Mammary epithelial cell (primary cell): ENCODE measurements at regions of chrX and their contacts with region 1.

Region 1: DNA sequence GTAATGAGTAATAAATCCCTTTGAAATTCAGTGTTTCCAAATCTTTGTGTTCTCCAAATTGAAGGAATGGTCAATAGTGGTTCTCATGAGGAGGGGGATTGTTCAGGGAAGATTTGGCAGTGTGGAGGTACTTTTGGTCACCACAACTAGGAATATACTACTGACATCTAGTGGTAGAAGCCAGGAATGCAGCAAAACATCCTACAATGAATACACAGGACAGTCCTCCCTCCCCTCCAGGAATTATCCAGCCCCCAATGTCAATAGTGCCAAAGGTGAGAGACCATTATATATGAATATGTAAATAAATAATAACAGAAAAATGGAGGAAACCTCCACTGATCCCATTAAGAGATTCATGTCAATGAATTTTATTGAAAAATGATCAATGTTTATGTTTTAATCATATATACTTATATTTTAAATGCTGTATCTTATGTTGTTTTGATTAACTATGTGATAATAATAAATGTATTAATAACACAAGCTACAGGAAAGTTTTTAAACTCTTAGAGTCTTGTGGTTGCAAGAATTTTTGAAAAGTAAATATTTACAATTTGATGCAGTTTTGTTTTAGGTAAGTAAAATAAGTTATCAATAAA is 14.4 kb upstream of the FAM9A start:
- DNase-seq: peak; percentile 33
- H3K4me3 ChIP-seq: no peak overlapping the region
- H3K27ac ChIP-seq: no peak overlapping the region
- H3K4me1 ChIP-seq: no peaks in the 10 kb centered on the region
- H3K27me3 ChIP-seq: no peaks in the 10 kb centered on the region
- CTCF ChIP-seq: peak; percentile 65 to 80

Region 2: DNA sequence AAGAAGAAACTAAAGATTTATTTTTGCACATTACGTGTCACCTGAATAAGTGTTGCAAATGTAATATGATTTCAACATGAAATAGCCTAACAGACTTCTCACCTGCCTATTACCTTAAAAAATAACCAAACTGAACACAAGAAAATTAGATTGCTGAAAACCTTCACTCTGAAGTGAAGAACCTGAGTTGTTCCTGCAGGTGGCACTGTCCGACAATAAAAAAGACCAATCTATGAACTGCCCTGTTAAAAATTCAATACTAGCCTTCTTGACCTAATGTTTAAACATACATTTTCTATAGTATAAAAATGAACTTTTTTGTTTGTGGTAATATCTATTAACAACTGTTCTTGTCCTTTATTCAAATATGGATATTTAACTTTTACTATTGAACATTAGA is 819.2 kb before region 1 on chrX:
- CTCF ChIA-PET with region 1: no interaction called
- dilution Hi-C with region 1: no loop called
- in situ Hi-C with region 1: no loop called
- intact Hi-C with region 1: loop called (anchors 5 kb)
- DNase-seq: peak; percentile 19
- H3K4me3 ChIP-seq: no peak overlapping the region
- H3K27ac ChIP-seq: no peak overlapping the region
- H3K4me1 ChIP-seq: no peaks in the 10 kb centered on the region
- H3K27me3 ChIP-seq: no peaks in the 10 kb centered on the region
- CTCF ChIP-seq: peak; percentile 60 to 62

Region 3: GRCh38 chrX:8743126-8743732 is 72.3 kb before region 1 on chrX:
- CTCF ChIA-PET with region 1: no interaction called
- dilution Hi-C with region 1: no loop called
- in situ Hi-C with region 1: no loop called
- intact Hi-C with region 1: loop called (anchors 1 kb)
- DNase-seq: peak; percentile 35
- H3K4me3 ChIP-seq: no peak overlapping the region
- H3K27ac ChIP-seq: no peak overlapping the region
- H3K4me1 ChIP-seq: no peaks in the 10 kb centered on the region
- H3K27me3 ChIP-seq: no peaks in the 10 kb centered on the region
- CTCF ChIP-seq: peak; percentile 73 to 80

Region 4: GRCh38 chrX:8748855-8749254 is 66.7 kb before region 1 on chrX:
- CTCF ChIA-PET with region 1: no interaction called
- dilution Hi-C with region 1: no loop called
- in situ Hi-C with region 1: loop called (anchors 10 kb)
- intact Hi-C with region 1: loop called (anchors 1 kb)
- DNase-seq: peak; percentile 19
- H3K4me3 ChIP-seq: no peak overlapping the region
- H3K27ac ChIP-seq: no peak overlapping the region
- H3K4me1 ChIP-seq: no peaks in the 10 kb centered on the region
- H3K27me3 ChIP-seq: no peaks in the 10 kb centered on the region
- CTCF ChIP-seq: peak; percentile 45 to 68

Region 5: DNA sequence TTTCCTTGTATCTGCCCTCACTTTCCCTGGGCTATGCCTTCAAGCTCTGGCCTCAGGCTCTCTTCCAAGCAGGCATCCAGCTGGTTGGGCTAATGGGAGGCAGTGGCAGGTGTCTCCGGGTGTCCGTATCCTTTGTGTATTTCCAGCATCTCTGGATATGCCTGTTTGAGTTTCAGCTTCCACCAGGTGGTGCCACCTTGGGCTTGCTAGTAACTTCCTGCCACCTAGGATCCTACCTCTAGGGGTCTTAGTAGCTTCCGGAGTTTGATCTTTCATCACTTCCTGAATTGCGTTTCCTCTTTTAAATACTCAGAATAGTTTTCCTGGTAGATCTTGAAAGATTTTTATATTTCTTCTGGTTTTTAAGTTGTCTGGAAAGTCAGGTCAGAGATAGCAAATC is 60.4 kb before region 1 on chrX:
- CTCF ChIA-PET with region 1: no interaction called
- dilution Hi-C with region 1: no loop called
- in situ Hi-C with region 1: loop called (anchors 10 kb)
- intact Hi-C with region 1: no loop called
- DNase-seq: no peak
- H3K4me3 ChIP-seq: no peak overlapping the region
- H3K27ac ChIP-seq: no peak overlapping the region
- H3K4me1 ChIP-seq: peaks cover 26% of the 10 kb centered on the region
- H3K27me3 ChIP-seq: no peaks in the 10 kb centered on the region
- CTCF ChIP-seq: peak; percentile 17 to 27

Region 6: DNA sequence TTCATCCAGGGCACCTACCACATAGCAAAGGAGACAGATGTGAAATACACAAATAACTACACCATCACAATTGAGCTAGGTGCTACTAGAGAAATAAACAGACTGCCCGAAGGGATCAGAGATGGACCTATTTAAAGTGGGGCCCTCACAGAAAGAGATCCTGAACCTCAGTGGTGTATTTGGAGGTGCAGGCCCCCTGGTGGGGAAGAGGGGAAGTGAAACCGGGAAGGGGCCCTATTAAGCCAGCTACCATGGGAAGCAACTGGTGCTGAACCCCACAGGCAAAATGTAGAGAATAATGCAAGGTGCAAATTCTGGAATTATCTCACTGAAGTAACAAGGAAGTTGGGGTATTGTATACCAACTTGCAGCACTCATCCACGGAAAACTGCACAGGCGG is 64.2 kb after region 1 on chrX:
- CTCF ChIA-PET with region 1: interaction called, 5 read pairs
- dilution Hi-C with region 1: no loop called
- in situ Hi-C with region 1: loop called in 1 of 2 experiments (anchors 5 kb)
- intact Hi-C with region 1: loop called (anchors 1 kb)
- DNase-seq: peak; percentile 4
- H3K4me3 ChIP-seq: no peak overlapping the region
- H3K27ac ChIP-seq: no peak overlapping the region
- H3K4me1 ChIP-seq: no peaks in the 10 kb centered on the region
- H3K27me3 ChIP-seq: no peaks in the 10 kb centered on the region
- CTCF ChIP-seq: peak; percentile 66 to 74

Region 7: GRCh38 chrX:10119399-10119990 is 1303.9 kb after region 1 on chrX:
- CTCF ChIA-PET with region 1: no interaction called
- dilution Hi-C with region 1: no loop called
- in situ Hi-C with region 1: no loop called
- intact Hi-C with region 1: loop called (anchors 5 kb)
- DNase-seq: peak; percentile 58
- H3K4me3 ChIP-seq: no peak overlapping the region
- H3K27ac ChIP-seq: no peak overlapping the region
- H3K4me1 ChIP-seq: no peaks in the 10 kb centered on the region
- H3K27me3 ChIP-seq: no peaks in the 10 kb centered on the region
- CTCF ChIP-seq: peak; percentile 99 to 100